Astrocyte of the cerebellum (primary cell): ENCODE measurements at regions of chr9 and their contacts with region 1.

Region 1: DNA sequence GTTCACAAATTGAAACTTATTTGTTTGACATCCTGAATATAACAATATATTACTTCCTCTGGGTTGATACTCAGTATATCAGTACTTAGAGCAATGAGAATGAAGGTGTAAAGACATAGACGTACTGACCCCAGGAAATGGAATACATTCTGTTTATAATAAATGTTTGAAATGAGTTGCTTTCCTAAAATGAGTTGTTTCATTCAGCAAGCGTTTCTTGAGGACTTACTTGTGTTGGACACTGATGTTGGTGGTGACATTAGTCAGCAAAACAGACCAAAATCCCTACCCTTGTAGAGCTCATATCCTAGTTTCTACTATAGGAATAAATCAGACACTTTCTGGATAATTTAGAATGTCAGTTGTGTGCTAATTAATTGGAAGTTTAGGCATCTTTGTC is 184.3 kb downstream of the ZDHHC21 start:
- DNase-seq: no peak
- H3K4me3 ChIP-seq: no peak overlapping the region
- CTCF ChIP-seq: no peak

Region 2: DNA sequence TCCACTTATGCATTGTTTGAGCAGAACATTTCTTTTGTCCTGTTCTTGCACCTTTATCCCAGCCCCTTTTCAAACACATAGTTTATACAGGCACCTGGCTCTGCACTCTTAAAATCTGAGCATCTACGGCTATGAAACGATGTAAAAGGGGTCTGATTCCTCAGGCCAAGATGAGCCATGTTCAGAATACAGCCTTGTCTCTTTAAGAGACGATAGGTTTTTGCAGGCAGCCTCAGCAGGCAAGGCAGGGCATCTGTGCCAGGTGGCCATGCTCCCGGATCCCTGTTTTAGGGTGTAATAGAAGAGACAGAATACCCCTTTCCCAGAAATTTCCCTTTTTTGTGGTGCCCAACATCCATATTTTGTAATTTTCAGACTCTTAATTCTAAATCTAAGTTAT is 105.8 kb before region 1 on chr9:
- in situ Hi-C with region 1: no loop called
- DNase-seq: no peak
- H3K4me3 ChIP-seq: no peak overlapping the region
- CTCF ChIP-seq: no peak

Region 3: DNA sequence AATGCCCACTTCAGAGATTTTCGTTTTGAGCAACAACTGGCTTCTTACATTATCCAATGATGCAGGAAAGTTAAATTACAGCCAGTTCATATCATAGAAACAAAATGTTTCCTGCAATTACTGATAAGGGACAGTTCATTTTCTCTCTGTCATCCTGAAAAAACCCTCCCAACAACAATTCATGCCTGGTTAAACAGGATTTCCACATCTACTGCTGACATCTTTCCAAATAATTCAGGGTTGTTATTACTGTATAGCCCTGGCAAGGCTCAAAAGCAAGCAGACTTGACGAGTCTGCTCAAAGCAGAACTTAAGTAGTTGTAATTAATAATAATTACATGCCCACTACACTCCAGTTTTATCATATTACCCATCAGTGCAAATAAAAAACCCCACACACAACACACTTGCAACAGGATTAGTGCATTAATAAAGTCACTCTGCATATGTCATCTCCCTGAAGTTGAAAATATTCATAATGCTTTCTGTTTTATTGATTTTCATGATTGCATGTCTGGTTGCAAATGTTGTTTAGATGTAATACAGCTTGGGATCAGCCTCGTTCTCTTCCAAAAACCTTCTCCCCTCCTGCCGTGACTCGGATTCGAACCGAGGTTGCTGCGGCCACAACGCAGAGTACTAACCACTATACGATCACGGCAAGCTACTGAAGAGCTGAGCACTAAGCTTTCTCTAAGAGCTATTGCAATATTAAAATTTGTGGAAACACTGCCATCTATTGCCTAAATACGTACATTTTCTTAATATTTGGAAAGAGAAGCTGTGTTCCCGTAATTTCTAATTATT is 75.3 kb before region 1 on chr9:
- in situ Hi-C with region 1: no loop called
- DNase-seq: peak; percentile 65
- H3K4me3 ChIP-seq: no peak overlapping the region
- CTCF ChIP-seq: no peak

Region 4: GRCh38 chr9:14471041-14471440 is 37.8 kb before region 1 on chr9:
- in situ Hi-C with region 1: loop called (anchors 5 kb)
- DNase-seq: no peak
- H3K4me3 ChIP-seq: no peak overlapping the region
- CTCF ChIP-seq: no peak